BJ (cell line): ENCODE measurements at regions of chr12 and their contacts with region 1.

Region 1: DNA sequence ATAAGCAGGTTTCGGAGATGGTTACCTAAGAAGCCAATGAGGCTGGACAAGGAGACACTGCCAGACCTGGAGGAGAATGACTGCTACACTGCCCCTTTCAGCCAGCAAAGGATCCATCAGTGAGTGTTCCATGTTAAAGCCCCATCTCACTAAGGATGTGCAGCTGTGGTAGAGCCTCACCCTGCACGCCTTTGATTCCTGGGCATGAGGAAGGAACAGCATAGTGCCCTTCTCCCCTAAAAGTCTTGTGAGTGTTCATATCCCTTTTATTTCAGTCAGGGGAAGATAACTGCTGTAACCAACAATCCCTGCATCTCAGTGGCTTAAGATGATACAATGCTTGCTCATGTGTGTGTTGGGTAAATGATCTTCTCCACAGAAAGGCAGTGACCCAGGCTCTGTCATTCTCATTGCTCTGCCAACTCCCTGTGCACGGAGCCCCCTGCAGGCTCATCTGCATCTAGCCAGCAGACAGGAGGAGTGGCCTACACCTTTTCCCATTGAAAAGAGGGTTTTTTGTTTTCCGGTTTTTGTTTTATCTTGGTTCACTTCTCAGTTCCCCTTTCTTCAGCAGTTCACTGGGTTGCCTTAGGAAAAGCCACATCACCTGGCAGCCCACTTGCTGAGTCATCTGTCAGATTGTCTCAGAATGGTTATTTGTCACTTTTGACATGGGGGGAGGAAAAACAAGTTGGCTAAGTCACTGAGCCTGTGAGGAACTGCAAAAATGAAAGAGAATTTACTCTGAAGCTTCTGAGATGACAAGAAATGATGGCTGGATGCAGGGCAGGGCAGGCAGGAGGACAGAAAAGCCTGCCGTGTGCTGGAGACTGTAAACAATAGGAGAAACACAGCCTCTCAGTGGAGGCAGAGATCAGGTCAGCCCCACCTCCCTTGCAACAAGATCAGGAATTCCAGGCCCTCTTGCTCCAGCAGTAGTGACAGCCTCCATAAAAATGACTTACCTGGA is 193.3 kb downstream of the ANO4 start:
- DNase-seq: no peak
- H3K4me3 ChIP-seq: no peak overlapping the region
- H3K27me3 ChIP-seq: no peaks in the 10 kb centered on the region
- CTCF ChIP-seq: peak; percentile 71

Region 2: DNA sequence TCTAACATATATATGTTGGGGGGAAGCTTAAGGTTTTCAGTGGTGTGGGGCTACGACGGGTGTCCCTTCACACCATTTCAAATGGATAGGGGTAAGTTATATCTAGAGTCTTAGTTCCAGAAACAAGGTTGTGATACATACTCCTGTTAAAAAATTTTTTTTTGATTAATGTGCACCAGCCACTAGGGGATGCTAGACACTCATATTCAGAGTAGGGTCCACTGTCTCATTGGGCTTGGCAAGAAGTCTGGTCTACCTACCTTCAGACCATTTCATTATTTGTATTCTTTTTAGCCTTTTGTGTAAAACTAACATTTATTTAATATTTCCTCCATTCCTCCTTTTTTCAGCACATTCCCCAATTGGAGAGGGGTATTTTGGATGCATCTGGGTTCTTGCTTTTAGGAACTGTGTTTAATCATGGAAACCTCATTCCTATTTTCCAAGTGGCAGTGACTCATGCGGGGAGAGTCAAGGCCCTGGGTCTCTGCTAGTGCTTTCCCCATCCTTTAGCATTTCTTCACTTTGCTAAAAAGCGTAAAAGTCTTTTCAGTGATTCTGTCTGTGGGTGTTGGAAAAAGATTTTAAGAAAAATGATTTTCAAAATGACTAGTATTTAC is 159.8 kb before region 1 on chr12:
- CTCF ChIA-PET with region 1: interaction called, 13 read pairs
- POLR2A ChIA-PET with region 1: no interaction called
- DNase-seq: no peak
- H3K4me3 ChIP-seq: no peak overlapping the region
- H3K27me3 ChIP-seq: no peaks in the 10 kb centered on the region
- CTCF ChIP-seq: peak; percentile 87

Region 3: DNA sequence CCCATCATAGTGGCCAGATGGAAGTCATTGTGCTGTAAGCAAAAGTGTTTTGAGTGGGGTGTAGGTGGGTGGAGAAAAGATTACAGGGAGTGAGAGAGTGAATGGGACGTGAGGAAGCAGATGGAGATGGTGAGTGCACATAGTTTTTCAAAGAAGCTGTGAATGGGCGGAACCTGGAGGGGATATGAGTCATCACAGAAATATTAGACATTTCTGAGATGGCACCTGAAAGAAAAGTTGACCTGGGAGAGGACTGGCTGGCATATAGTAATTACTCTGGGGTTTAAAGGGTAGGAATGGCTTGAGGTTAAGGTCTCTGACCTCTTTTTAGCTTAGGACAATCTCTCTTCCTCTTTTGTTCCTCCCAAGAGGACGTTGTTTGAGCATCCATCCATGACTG is 142.7 kb before region 1 on chr12:
- CTCF ChIA-PET with region 1: no interaction called
- POLR2A ChIA-PET with region 1: no interaction called
- DNase-seq: no peak
- H3K4me3 ChIP-seq: no peak overlapping the region
- H3K27me3 ChIP-seq: no peaks in the 10 kb centered on the region; the same call in 1 of the 2 replicates
- CTCF ChIP-seq: no peak

Region 4: DNA sequence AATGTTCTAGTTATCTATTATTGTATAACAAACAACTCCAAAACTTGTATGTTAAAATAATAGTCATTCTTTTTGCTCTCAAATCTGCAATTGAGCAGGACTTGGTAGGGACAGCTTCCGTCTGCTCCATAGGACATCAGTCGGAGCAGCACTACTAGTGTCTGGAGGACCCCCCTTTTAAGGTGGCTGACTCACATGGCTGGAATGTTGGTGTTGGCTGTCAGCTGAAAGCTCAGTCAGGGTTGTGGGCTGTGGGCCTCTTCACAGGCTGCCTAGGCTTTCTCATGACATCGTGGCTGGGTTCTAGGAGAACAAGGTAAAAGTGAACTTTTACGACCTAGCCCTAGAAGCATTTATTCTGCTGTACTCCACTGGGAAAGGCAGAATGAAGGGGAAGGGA is 32.7 kb before region 1 on chr12:
- CTCF ChIA-PET with region 1: no interaction called
- POLR2A ChIA-PET with region 1: no interaction called
- DNase-seq: no peak
- H3K4me3 ChIP-seq: no peak overlapping the region
- H3K27me3 ChIP-seq: no peaks in the 10 kb centered on the region
- CTCF ChIP-seq: no peak

Region 5: DNA sequence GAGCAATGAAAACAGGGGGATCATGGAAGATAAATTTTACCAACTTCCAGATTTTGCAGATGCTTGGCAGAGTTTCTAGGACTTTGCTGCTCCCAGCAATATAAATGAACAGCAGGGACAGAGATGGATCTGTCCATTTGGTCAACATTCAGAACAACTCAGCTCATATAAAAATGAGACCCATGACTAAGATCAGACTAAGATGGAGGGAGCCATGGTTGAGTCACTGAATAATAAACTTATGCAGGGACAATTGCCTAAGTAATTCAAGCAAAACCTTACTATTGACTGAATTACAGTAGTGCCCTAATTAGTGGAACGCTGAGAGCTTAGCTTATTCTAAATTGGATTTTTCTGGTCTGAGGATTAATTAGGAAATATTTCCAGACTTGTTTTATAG is 17.1 kb after region 1 on chr12:
- CTCF ChIA-PET with region 1: no interaction called
- POLR2A ChIA-PET with region 1: no interaction called
- DNase-seq: no peak
- H3K4me3 ChIP-seq: no peak overlapping the region
- H3K27me3 ChIP-seq: no peaks in the 10 kb centered on the region
- CTCF ChIP-seq: no peak

Region 6: DNA sequence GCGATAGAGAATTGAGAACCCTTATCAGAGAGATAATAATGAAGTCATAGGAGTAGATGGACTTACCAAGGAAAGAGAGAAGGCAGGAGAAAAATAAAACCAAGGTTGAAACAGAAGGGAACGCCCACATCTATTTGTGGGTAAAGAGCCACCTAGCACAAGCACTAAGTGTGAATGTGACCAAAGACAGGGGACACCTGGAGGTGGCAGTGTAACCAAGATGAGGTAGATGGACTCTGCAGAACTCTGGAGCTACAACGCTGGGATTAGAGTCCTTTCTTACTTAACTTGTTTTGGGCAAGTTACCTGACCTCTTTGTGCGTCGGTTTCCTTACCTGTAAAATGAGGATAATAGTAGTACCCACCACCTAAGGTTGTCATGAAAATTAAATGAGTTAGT is 120.3 kb after region 1 on chr12:
- CTCF ChIA-PET with region 1: no interaction called
- POLR2A ChIA-PET with region 1: no interaction called
- DNase-seq: no peak
- H3K4me3 ChIP-seq: no peak overlapping the region
- H3K27me3 ChIP-seq: no peaks in the 10 kb centered on the region
- CTCF ChIP-seq: no peak